Activated B cell treated with CpG ODN at 0.5 μM for 24 hours (primary cell): ENCODE measurements at regions of chr14 and their contacts with region 1.

Region 1: GRCh38 chr14:45095143-45095542 is 11.2 kb downstream of the PRPF39 start:
- DNase-seq: no peak
- ATAC-seq: no peak
- H3K4me3 Mint-ChIP-seq: no peak overlapping the region
- H3K27ac Mint-ChIP-seq: no peak overlapping the region
- H3K4me1 Mint-ChIP-seq: peaks cover 13% of the 10 kb centered on the region
- H3K27me3 Mint-ChIP-seq: no peaks in the 10 kb centered on the region
- CTCF ChIP-seq: no peak

Region 2: GRCh38 chr14:45112889-45113781 is 18.0 kb after region 1 on chr14:
- CTCF ChIA-PET with region 1: no interaction called
- POLR2A ChIA-PET with region 1: no interaction called
- intact Hi-C with region 1: loop called (anchors 2 kb)
- DNase-seq: no peak
- ATAC-seq: no peak
- H3K4me3 Mint-ChIP-seq: no peak overlapping the region
- H3K27ac Mint-ChIP-seq: no peak overlapping the region
- H3K4me1 Mint-ChIP-seq: no peaks in the 10 kb centered on the region
- H3K27me3 Mint-ChIP-seq: no peaks in the 10 kb centered on the region
- CTCF ChIP-seq: no peak